Astrocyte of the cerebellum (primary cell): ENCODE measurements at regions of chr12 and their contacts with region 1.

Region 1: GRCh38 chr12:110501752-110502738 is at the starts of genes RAD9B and VPS29:
- DNase-seq: peak; percentile 92
- H3K4me3 ChIP-seq: peak within 1 kb of the TSS; percentile 87
- CTCF ChIP-seq: no peak

Region 2: DNA sequence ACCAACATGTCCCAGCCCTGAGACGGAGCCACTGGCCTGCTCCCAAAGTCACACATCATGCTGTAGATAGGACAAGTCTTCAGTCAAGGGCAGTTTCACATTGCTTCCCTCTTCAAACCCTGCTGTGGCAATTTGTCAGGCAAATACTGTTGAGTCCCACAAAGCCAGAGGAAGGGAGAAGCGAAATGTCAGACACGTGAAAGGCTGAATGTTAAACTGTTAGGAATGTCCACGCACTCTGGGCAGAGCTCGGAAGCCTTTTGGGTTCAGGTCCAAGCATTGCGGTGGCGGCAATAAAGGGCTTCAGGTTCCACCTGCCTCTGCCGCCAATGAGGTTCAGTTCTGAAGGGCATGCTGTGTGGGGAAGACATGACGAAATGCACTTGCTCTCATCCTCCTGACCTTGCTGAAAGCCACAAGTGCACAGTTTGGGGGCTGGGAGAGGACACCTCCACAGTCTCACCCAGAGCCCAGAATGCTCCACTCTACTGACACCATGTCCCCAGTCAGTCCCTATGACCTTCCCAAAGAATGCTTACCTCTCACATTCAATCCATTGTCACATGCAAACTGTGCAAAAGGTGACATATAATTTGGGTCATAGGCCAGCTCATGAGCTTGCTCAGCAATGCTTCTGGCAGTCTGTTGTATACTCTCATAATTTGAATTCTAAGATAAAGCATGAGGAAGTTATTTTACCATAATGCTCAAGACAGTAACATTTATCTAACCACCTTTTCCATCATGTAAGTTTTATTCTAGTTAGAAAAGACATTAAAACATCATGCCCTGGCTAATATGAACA is 35.8 kb after region 1 on chr12:
- in situ Hi-C with region 1: loop called (anchors 5 kb)
- DNase-seq: no peak
- H3K4me3 ChIP-seq: no peak overlapping the region
- CTCF ChIP-seq: no peak